ENCODE measurements at regions of chr16 and their contacts with region 1.

Region 1: DNA sequence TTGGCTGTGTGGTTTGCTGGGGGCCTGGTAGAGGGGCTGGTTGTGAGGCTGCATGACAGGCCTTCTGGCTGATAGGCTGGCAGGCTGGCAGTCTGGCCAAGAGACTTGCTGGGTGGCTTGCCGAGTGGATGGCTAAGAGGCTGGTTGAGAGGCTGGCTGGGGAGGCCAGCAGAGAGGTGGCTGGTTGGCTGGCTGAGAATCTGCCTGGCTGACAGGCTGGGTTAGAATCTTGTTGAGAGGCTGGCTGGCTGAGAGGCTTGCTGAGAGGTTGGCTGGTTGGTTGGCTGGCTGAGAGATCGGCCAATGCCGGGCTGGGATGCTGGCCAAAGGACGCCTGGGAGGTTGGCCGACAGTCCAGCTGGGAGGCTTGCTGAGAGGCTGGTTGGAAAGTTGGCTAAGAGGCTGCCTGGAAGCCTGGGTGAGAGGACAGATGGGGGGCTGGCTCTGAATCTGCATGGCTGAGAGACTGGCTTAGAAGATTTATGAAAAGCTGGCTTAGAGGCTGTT is 35.9 kb upstream of the ACSM2B start:
- DNase-seq: peak; percentile 84 to 85
- ATAC-seq: peak; percentile 80
- H3K4me3 ChIP-seq: peak overlapping the region; percentile 10 to 11
- H3K27ac ChIP-seq: peak overlapping the region; percentile 87 to 99
- H3K4me1 ChIP-seq: peaks cover 0 to 2% of the 10 kb centered on the region in 2 donors
- H3K27me3 ChIP-seq: no peaks in the 10 kb centered on the region

Region 2: GRCh38 chr16:20484726-20485125 is 127.3 kb before region 1 on chr16:
- intact Hi-C with region 1: no loop called
- DNase-seq: no peak
- ATAC-seq: no peak
- H3K4me3 ChIP-seq: no peak overlapping the region
- H3K27ac ChIP-seq: no peak overlapping the region
- H3K4me1 ChIP-seq: no peaks in the 10 kb centered on the region
- H3K27me3 ChIP-seq: no peaks in the 10 kb centered on the region

Region 3: GRCh38 chr16:20660325-20660724 is 48.3 kb after region 1 on chr16:
- intact Hi-C with region 1: no loop called
- DNase-seq: no peak
- ATAC-seq: no peak
- H3K4me3 ChIP-seq: no peak overlapping the region
- H3K27ac ChIP-seq: no peak overlapping the region
- H3K4me1 ChIP-seq: no peaks in the 10 kb centered on the region
- H3K27me3 ChIP-seq: no peaks in the 10 kb centered on the region

Region 4: GRCh38 chr16:20675488-20676267 is 63.6 kb after region 1 on chr16:
- intact Hi-C with region 1: loop called in 1 of 2 experiments (anchors 2 kb)
- DNase-seq: no peak
- ATAC-seq: peak; percentile 78
- H3K4me3 ChIP-seq: peak overlapping the region; percentile 64 to 76
- H3K27ac ChIP-seq: peak overlapping the region; percentile 70 to 82
- H3K4me1 ChIP-seq: peaks cover 0 to 3% of the 10 kb centered on the region in 2 donors
- H3K27me3 ChIP-seq: no peaks in the 10 kb centered on the region

Region 5: GRCh38 chr16:20741554-20742285 is 129.7 kb after region 1 on chr16 and contains the start of gene THUMPD1:
- intact Hi-C with region 1: loop called (anchors 5 to 10 kb)
- DNase-seq: peak; percentile 98 to 99
- ATAC-seq: peak; percentile 98
- H3K4me3 ChIP-seq: peak within 1 kb of the TSS; percentile 66 to 93
- H3K27ac ChIP-seq: peak within 1 kb of the TSS; percentile 91 to 95
- H3K4me1 ChIP-seq: peaks cover 0 to 3% of the 10 kb centered on the region in 2 donors
- H3K27me3 ChIP-seq: peaks cover 0 to 2% of the 10 kb centered on the region in 2 donors
- total RNA-seq, gene THUMPD1: 31.7 to 38.1 TPM

Region 6: DNA sequence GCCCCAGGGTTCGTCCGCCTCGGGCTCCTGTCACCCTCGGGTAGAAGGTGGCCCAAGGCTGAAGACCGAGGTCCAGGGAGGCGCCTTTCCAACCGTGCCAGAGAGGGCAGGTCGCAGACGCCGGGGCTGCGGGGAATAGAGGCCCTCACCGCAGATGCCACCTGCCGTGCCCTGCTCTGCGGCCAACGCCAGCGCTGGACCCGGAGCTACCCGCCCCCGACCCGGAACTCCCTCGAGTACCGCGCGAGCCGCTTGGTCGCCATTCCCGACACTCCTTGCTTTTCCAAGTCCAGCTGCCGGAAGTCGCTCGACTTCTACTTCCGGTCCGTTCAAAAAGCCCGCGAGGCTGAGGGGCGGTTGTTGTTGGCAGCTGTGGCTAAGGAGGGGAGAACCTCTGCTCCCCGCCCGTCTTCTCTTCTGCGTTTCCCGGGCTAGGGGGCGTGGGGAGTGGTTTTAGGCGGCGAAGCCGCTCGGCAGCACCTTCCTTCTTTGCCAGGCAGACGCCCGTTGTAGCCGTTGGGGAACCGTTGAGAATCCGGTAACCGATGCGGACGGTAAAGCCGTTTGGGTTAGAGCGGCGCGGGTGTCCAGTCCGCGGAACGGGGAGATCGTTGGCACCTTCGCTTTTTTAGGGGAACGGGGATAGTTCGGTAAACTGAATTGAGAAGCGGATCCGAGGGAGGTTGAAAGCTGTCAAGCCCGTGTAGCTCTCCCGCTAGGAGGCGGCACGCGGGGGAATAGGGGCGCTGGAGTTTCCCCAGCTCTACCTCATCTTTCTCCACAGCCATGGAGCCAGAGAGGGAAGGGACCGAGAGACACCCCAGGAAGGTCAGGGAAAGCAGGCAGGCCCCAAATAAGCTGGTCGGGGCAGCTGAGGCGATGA is 194.4 kb after region 1 on chr16 and contains the starts of genes ERI2 and REXO5:
- intact Hi-C with region 1: loop called in 1 of 2 experiments (anchors 5 kb)
- DNase-seq: peak; percentile 94 to 96
- ATAC-seq: peak; percentile 95
- H3K4me3 ChIP-seq: peak within 1 kb of the TSS; percentile 51 to 74
- H3K27ac ChIP-seq: peak within 1 kb of the TSS; percentile 47 to 98
- H3K4me1 ChIP-seq: no peaks in the 10 kb centered on the region
- H3K27me3 ChIP-seq: no peaks in the 10 kb centered on the region
- total RNA-seq, gene ERI2: 6.7 to 14.3 TPM
- total RNA-seq, gene REXO5: 1.1 to 3.0 TPM

Measured in aorta (tissue), 5 donors.